Activated B cell treated with CpG ODN at 0.5 μM for 24 hours (primary cell): ENCODE measurements at regions of chr5 and their contacts with region 1.

Region 1: DNA sequence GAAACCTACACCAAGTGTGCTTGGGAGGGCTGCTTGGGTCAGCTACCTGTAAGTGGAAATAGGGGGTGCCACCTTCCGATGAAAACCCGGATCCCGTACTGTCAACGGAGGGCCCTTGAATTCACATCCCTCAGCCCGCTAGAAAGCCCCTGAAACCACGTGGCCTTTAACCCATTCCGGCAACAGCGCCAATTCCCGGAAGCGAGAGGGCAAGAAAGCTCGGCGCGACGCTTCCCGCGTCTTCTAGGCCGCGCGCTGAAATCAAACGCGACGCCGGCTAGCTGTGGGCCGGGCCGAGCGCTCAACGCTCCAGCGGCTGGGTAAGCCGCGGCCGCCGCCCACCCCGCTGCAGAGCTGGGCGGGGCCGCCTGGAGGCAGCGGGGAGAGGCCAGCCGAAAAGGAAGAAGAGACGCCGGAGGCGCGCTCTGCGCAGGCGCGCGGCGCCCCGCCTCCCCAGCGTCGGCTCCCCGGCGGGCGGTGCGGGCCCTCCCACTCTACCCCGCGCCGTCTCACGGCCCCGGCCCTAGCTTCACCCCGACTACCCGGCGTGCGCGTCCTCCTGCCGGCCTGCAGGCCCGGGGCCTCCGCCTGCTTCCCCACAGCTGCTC is at the start of gene KIF2A:
- DNase-seq: peak; percentile 93
- ATAC-seq: peak; percentile 91
- H3K4me3 Mint-ChIP-seq: peak within 1 kb of the TSS; percentile 98
- H3K27ac Mint-ChIP-seq: peak within 1 kb of the TSS; percentile 98
- H3K4me1 Mint-ChIP-seq: peaks cover 46% of the 10 kb centered on the region
- H3K27me3 Mint-ChIP-seq: no peaks in the 10 kb centered on the region
- CTCF ChIP-seq: no peak
- total RNA-seq, gene KIF2A: 42.6 and 45.9 TPM in 2 replicates

Region 2: GRCh38 chr5:61408476-61409168 is 897.2 kb before region 1 on chr5:
- CTCF ChIA-PET with region 1: no interaction called
- POLR2A ChIA-PET with region 1: no interaction called
- intact Hi-C with region 1: loop called (anchors 2 kb)
- DNase-seq: peak; percentile 94
- ATAC-seq: peak; percentile 99
- H3K4me3 Mint-ChIP-seq: peak overlapping the region; percentile 70
- H3K27ac Mint-ChIP-seq: peak overlapping the region; percentile 85
- H3K4me1 Mint-ChIP-seq: peaks cover 29% of the 10 kb centered on the region
- H3K27me3 Mint-ChIP-seq: no peaks in the 10 kb centered on the region
- CTCF ChIP-seq: no peak

Region 3: DNA sequence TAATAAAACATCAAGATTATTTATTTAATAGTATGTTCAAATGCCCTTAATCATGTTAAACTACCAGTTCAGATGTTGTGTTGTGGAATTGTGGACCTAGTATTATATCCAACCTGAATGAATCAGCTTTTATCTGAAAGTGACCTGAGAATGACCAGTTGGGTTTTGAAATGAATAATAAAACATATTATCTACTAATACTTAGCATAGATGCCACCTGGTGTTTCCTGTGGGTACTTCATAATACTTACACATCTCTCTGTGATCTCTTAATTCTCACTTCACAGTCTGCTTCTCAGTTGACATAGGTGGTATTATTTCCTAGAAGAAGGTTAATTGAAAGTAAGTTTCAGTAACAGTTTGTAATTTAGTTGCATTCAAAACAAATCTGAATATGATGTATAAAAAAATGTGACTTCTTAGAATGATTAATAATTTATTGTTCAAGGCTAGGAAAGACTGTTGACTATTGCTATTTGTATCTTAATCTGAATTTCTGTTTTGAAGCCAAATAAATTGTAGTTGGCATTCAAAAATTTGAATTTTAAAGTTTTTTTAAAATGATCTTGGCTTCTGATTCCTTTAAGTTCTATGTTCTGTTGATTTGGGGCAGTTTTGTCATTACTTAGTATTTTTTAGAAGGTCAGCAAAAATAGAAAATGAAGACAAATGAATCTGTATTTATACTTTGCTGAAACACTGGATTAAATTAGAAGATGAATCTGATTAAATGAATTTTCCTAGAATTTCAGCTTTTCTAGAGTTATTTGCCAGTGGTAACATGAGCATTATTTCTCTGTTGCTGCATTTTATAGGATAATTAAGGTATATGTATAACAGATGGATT is 48.4 kb after region 1 on chr5:
- CTCF ChIA-PET with region 1: interaction called, 4 read pairs
- POLR2A ChIA-PET with region 1: no interaction called
- intact Hi-C with region 1: loop called (anchors 1 kb)
- DNase-seq: no peak
- ATAC-seq: peak; percentile 64
- H3K4me3 Mint-ChIP-seq: no peak overlapping the region
- H3K27ac Mint-ChIP-seq: no peak overlapping the region
- H3K4me1 Mint-ChIP-seq: no peaks in the 10 kb centered on the region
- H3K27me3 Mint-ChIP-seq: no peaks in the 10 kb centered on the region
- CTCF ChIP-seq: no peak

Region 4: GRCh38 chr5:62412537-62413329 is 106.9 kb after region 1 on chr5 and contains the start of gene IPO11:
- CTCF ChIA-PET with region 1: no interaction called
- POLR2A ChIA-PET with region 1: interaction called, 10 read pairs
- intact Hi-C with region 1: loop called (anchors 1 kb)
- DNase-seq: peak; percentile 99
- ATAC-seq: peak; percentile 94
- H3K4me3 Mint-ChIP-seq: peak within 1 kb of the TSS; percentile 92
- H3K27ac Mint-ChIP-seq: peak within 1 kb of the TSS; percentile 87
- H3K4me1 Mint-ChIP-seq: peaks cover 20% of the 10 kb centered on the region
- H3K27me3 Mint-ChIP-seq: no peaks in the 10 kb centered on the region
- CTCF ChIP-seq: no peak
- total RNA-seq, gene IPO11: 32.9 and 34.7 TPM in 2 replicates